ENCODE measurements at regions of chr20 and their contacts with region 1.

Region 1: GRCh38 chr20:64188682-64189529 is 24.7 kb downstream of the MYT1 start:
- DNase-seq: peak; percentile 86 to 95
- H3K4me3 ChIP-seq: no peak overlapping the region
- H3K4me3 Mint-ChIP-seq: peak overlapping the region; percentile 46
- H3K27ac Mint-ChIP-seq: peak overlapping the region; percentile 69
- H3K4me1 ChIP-seq: peaks cover 22% of the 10 kb centered on the region
- H3K4me1 Mint-ChIP-seq: peaks cover 21% of the 10 kb centered on the region
- H3K27me3 ChIP-seq: no peaks in the 10 kb centered on the region
- H3K27me3 Mint-ChIP-seq: peaks cover 12% of the 10 kb centered on the region
- CTCF ChIP-seq: no peak

Region 2: DNA sequence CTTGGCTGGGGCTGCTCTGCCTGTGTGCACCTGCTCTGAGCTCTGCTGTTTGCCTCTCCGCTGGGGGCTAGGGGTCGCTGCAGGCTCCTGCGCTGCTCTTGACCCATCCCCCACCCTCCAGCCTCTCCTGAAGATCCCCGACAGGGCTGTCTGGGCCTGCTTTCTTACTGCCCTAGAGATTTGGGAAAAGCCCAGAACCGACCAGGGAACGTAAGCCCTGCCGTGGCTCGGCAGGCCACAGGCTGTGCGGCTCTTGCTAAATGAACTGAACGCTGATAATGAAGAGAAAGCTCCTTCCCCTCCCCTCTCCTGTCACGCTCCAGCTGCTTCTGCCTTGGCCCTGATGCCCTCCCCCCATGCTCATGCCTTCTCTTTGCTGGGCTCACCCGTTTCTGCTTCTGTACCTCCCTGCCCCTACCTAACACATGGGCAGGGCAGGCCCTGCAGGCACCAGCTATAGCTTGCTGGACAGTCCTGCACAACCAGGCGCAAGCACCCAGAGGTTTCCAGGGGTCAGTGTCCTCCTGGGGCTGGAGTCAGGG is 34.7 kb after region 1 on chr20:
- CTCF ChIA-PET with region 1: interaction called, 3 read pairs
- POLR2A ChIA-PET with region 1: no interaction called
- intact Hi-C with region 1: loop called (anchors 5 kb)
- DNase-seq: peak in 1 of 2 experiments; percentile 70
- H3K4me3 ChIP-seq: no peak overlapping the region
- H3K4me3 Mint-ChIP-seq: no peak overlapping the region
- H3K27ac Mint-ChIP-seq: peak overlapping the region; percentile 30
- H3K4me1 ChIP-seq: peaks cover 51% of the 10 kb centered on the region
- H3K4me1 Mint-ChIP-seq: peaks cover 20% of the 10 kb centered on the region
- H3K27me3 ChIP-seq: no peaks in the 10 kb centered on the region
- H3K27me3 Mint-ChIP-seq: peaks cover 14% of the 10 kb centered on the region
- CTCF ChIP-seq: peak; percentile 31 to 63

Measured in Caco-2 (cell line).